A549 (cell line): ENCODE measurements at regions of chr13 and their contacts with region 1.

Region 1: DNA sequence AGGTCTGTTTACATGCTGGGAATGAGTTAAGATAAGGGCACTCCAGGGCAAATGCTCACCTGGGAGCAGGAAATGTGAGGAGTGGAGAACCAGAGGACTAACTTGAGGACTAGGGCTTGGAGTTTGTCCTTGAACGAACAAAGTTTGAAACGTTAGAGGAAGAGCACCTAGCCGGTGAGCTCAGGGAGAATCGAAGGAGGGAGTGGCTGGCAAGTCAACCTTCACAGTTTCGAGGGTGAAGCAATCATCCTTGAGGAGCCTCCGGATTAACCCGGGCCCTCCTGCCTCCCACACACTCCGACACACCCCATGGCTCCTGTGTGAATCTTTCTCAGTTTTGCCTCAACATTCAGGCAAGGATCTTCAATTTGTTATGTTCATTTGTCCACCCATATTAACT is 58.6 kb downstream of the LMO7 start:
- DNase-seq: no peak
- ATAC-seq: no peak
- H3K4me3 ChIP-seq: no peak overlapping the region
- H3K27ac ChIP-seq: peak overlapping the region in 1 of 2 experiments; percentile 35; a peak in 1 of 6 replicates
- H3K4me1 ChIP-seq: peaks cover 27% of the 10 kb centered on the region
- CTCF ChIP-seq: no peak
- EP300 ChIP-seq: no peak
- POLR2A ChIP-seq: no peak
- RAD21 ChIP-seq: no peak

Region 2: DNA sequence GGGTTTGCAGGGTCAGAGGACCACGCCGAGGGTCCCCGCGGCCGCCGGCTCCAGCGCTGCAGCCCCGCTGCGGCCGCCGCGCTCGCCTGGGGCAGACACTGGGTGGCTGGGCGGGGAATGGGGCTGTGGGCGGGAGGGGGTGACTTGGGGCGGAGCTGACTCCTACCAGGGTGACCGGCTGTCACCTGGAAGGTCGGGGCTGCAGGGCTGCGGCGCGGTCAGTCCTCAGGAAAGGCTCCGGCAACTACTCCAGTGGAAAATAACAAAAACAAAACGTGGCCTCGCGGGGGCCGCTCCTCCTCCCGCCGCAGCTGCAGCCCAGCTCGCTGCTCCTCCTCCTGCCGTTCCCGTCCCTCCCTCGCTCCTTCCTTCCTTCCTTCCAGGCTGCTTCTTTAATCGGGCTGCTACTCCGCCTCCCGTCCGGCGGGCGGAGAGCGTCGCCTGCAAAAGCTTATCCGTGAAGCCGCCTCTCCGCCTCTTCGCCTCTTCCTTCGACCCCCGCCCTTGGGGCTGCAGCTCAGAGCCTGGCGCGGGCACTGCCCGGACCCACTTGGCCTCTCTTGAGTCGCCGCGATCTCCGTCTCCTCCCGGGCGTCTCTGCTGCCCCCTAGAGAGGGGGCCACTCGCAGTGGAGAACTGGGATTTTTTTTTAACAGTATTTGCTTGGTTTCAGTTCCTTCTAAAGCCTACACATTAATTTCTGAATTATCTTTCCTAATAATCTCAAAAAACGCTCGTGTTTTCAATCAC is 212.5 kb before region 1 on chr13 and contains the start of gene TBC1D4:
- CTCF ChIA-PET with region 1: no interaction called
- POLR2A ChIA-PET with region 1: no interaction called
- DNase-seq: peak; percentile 50 to 90
- ATAC-seq: peak; percentile 86 to 88
- H3K4me3 ChIP-seq: peak within 1 kb of the TSS; percentile 92
- H3K27ac ChIP-seq: peak within 1 kb of the TSS; percentile 74 to 92
- H3K4me1 ChIP-seq: peaks cover 41% of the 10 kb centered on the region
- CTCF ChIP-seq: peak; percentile 78
- EP300 ChIP-seq: no peak
- POLR2A ChIP-seq: peak; percentile 27; the same call in 1 of the 2 replicates
- RAD21 ChIP-seq: peak; percentile 56 to 75
- polyA plus RNA-seq, gene TBC1D4: 12.5 and 17.6 TPM in 2 replicates

Region 3: DNA sequence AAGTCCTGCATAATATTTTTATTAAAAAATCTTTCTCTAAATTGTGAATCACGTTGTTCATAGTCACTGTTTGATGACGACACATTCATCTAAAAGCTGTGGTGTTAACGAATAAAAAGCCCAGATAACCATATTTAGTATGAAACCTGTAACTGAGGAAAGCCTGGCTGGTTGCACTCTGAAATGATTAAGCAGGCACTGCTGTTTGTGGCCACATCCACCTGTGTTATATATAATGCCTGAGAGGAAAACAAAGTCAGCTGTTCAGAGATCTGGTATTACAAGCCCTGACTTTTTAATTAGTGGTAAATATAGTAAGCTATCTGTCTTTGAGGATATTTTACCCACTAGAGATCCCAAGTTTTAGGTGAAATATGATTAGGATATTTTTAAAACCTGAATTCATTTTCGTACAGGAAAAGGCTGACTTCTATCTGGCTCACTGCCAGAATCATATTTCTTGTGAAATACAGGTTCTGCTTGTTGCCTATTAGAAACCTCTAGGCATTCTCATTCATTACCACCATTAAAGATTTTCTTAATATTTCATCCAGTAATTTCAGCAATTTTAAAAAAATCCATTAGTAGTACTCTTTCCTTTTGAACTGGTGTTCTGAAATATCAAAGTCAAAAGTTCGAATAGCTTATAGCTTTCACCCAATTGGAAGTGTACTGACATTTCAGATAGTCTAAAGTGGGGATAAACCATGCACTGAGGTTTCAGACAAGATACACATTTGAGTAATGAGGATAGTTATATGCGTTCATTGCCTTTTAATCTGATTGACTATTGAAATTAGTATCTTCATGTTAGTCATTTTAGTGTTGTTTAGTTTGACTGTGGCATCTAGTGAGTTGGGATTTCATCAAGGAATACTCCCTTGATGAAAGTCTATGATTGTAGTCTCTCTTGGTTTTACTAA is 21.1 kb after region 1 on chr13:
- CTCF ChIA-PET with region 1: interaction called, 25 read pairs
- POLR2A ChIA-PET with region 1: no interaction called
- DNase-seq: no peak
- ATAC-seq: no peak
- H3K4me3 ChIP-seq: no peak overlapping the region
- H3K27ac ChIP-seq: peak overlapping the region; percentile 58; a peak in 4 of 6 replicates
- H3K4me1 ChIP-seq: peaks cover 13% of the 10 kb centered on the region
- CTCF ChIP-seq: no peak
- EP300 ChIP-seq: no peak
- POLR2A ChIP-seq: no peak
- RAD21 ChIP-seq: no peak

Region 4: DNA sequence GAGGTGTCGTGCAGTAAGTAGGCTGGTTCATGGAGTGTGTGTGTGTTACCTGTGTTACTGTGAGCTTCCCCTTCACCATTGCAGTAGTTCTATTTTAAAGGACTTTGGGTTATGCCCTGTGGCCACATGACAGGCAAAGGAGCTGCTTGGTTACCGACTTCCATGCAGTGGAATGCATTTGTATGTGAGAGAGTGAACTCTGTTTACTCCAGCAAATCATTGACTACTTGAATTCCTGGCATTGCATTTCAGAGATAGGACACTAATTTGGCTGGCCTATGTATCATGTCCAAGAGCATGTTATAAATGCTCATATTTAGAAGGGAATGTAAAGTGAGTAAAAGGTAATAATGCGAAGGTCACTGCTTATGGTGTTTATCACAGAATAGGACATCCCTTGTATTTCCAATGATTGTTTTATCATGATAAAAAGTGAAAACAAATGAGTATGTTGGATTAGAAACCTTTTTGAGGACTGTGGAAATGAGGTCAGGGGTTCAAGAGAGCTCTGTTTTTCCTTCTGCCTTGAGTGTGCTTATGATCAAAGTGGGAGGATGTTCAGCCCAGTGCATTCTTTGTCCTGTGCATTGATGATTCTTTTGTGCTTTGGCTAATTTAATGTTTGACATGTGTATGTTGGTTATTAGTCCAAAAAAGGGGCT is 97.9 kb after region 1 on chr13:
- CTCF ChIA-PET with region 1: interaction called, 21 read pairs
- POLR2A ChIA-PET with region 1: no interaction called
- DNase-seq: peak; percentile 23 to 67
- ATAC-seq: peak; percentile 72 to 91; a peak in 5 of 6 replicates
- H3K4me3 ChIP-seq: no peak overlapping the region
- H3K27ac ChIP-seq: peak overlapping the region; percentile 75 to 79
- H3K4me1 ChIP-seq: peaks cover 63% of the 10 kb centered on the region
- CTCF ChIP-seq: no peak
- EP300 ChIP-seq: no peak
- POLR2A ChIP-seq: no peak
- RAD21 ChIP-seq: no peak; a peak in 1 of 5 replicates

Region 5: GRCh38 chr13:75855216-75855615 is 160.5 kb after region 1 on chr13:
- CTCF ChIA-PET with region 1: interaction called, 11 read pairs
- POLR2A ChIA-PET with region 1: no interaction called
- DNase-seq: no peak
- ATAC-seq: no peak
- H3K4me3 ChIP-seq: no peak overlapping the region
- H3K27ac ChIP-seq: no peak overlapping the region
- H3K4me1 ChIP-seq: no peaks in the 10 kb centered on the region
- CTCF ChIP-seq: no peak
- EP300 ChIP-seq: no peak
- POLR2A ChIP-seq: no peak
- RAD21 ChIP-seq: no peak

Region 6: GRCh38 chr13:76790980-76791819 is 1096.5 kb after region 1 on chr13:
- CTCF ChIA-PET with region 1: no interaction called
- POLR2A ChIA-PET with region 1: no interaction called
- DNase-seq: no peak
- ATAC-seq: no peak
- H3K4me3 ChIP-seq: no peak overlapping the region
- H3K27ac ChIP-seq: no peak overlapping the region
- H3K4me1 ChIP-seq: no peaks in the 10 kb centered on the region
- CTCF ChIP-seq: no peak
- EP300 ChIP-seq: no peak
- POLR2A ChIP-seq: no peak
- RAD21 ChIP-seq: no peak